K562 (cell line): ENCODE measurements at regions of chr2 and their contacts with region 1.

Region 1: GRCh38 chr2:53826587-53827397 is 33.0 kb downstream of the GPR75 start:
- DNase-seq: no peak
- ATAC-seq: no peak
- H3K4me3 ChIP-seq: no peak overlapping the region
- H3K27ac ChIP-seq: no peak overlapping the region
- H3K4me1 ChIP-seq: no peaks in the 10 kb centered on the region
- H3K27me3 ChIP-seq: no peaks in the 10 kb centered on the region
- CTCF ChIP-seq: no peak
- EP300 ChIP-seq: no peak
- POLR2A ChIP-seq: no peak
- RAD21 ChIP-seq: no peak

Region 2: GRCh38 chr2:53593891-53594585 is 232.8 kb before region 1 on chr2:
- CTCF ChIA-PET with region 1: no interaction called
- POLR2A ChIA-PET with region 1: no interaction called
- in situ Hi-C with region 1: no loop called
- intact Hi-C with region 1: loop called (anchors 10 kb)
- DNase-seq: no peak
- ATAC-seq: no peak
- H3K4me3 ChIP-seq: no peak overlapping the region
- H3K27ac ChIP-seq: no peak overlapping the region
- H3K4me1 ChIP-seq: no peaks in the 10 kb centered on the region
- H3K27me3 ChIP-seq: no peaks in the 10 kb centered on the region; a peak in 1 of 5 replicates
- CTCF ChIP-seq: no peak
- EP300 ChIP-seq: no peak
- POLR2A ChIP-seq: no peak
- RAD21 ChIP-seq: no peak

Region 3: DNA sequence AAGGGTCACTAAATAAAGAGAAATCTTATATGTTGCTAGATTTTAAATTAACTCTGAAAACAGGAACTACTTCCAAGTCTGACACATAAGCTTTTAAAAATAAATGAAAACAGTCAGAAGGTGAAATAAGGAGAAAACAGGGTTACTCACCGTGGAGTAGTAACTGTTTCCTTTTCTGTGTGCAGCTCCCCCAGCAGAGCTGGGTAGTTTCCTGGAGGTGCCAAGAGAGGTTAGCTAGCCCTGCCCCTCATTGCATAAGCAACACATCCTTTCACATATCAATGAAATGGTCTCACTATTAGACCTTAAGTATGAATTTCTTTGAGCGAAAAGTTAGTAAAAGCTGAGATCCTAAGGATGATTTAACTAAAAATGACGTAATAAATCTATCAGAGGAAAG is 86.9 kb after region 1 on chr2:
- CTCF ChIA-PET with region 1: no interaction called
- POLR2A ChIA-PET with region 1: no interaction called
- in situ Hi-C with region 1: no loop called
- intact Hi-C with region 1: no loop called
- DNase-seq: no peak
- ATAC-seq: no peak
- H3K4me3 ChIP-seq: no peak overlapping the region
- H3K27ac ChIP-seq: no peak overlapping the region
- H3K4me1 ChIP-seq: no peaks in the 10 kb centered on the region
- H3K27me3 ChIP-seq: no peaks in the 10 kb centered on the region
- CTCF ChIP-seq: no peak
- EP300 ChIP-seq: no peak
- POLR2A ChIP-seq: no peak
- RAD21 ChIP-seq: no peak